HepG2 (cell line): ENCODE measurements at regions of chr10 and their contacts with region 1.

Region 1: DNA sequence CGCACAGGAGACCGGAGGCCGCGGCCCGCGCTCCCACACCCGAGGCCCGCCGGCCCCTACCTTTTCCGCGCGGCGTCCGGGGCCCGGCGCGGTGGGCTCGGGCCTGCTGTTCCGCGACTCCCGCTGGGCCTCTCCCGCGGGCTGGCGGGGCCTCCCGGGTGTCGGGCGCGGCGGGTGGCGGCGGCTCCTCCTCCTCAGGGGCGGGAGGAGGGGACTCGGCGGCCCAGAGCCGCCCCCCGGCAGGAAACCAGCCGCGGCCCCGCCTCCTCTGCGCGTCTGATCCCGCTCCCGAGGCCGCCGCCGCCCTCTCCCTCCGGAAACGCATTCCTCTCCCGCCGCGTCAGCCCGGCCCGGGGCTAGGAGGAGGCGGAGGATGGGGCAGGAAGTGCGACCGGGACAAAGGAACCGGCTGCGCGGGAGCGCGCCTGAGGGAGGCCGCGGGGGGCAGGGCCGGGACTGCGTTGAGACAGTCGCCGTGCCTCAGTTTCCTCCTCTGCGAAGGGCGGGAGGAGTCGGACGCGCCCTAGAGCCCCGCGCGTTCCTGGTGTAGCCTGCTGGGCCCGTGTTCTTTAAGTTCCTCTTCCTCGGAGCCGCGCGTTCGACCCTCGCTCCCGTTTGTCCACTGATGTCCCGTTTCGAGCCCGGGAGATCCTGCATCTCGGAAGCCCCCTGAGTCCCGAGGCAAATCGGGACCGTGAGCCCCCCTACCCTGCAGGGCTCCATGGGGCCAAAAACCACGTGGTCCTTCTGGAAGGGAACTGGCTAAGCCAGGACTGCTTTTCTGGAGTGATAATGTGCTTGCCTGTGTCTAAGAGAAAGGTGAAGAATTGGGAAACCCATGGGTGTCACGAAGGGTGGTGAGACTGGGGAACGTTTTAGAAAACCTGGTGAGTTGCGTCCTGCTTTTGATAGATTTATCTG is at the start of gene ITGB1:
- DNase-seq: peak; percentile 86
- ATAC-seq: peak; percentile 93
- H3K4me3 ChIP-seq: peak within 1 kb of the TSS; percentile 91 to 95 (median 95)
- H3K27ac ChIP-seq: peak within 1 kb of the TSS; percentile 96
- H3K4me1 ChIP-seq: peaks cover 56% of the 10 kb centered on the region
- H3K27me3 ChIP-seq: no peaks in the 10 kb centered on the region; a peak in 1 of 5 replicates
- CTCF ChIP-seq: 0 out of 2 replicates have a peak, but pooled peaks have one; percentile 6
- EP300 ChIP-seq: peak in 1 of 2 experiments; percentile 52; a peak in 1 of 4 replicates
- POLR2A ChIP-seq: peak; percentile 93 to 94
- RAD21 ChIP-seq: peak; percentile 37; the same call in 1 of the 2 replicates
- total RNA-seq, gene ITGB1: 123 and 190 TPM in 2 replicates

Region 2: DNA sequence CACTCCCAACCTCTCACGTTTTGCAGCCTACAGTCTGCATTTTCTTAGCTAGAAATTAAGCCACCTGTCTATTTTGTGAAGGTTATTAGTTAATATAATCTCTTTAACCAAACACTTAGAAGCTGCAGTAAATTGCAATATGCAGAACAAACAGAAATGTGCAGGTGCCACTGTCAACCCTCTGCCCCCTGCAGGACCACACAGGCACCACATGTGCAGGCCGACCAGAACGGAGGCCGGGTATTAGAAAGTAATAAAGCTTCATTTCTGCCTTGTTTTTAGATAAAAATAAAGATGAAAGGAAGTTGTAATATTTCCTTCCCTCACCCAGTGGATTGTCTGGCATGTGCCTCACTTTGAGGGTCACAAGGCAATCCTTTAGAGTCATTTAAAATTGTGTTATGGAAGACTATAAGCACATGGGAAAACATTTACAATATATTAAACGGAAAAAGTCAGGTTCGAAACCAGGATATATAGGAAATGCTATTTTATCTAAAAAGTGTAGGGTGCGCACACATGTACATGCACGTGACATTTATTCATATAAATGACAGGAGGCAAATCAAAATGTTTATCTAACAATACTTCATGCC is 1187.9 kb before region 1 on chr10:
- CTCF ChIA-PET with region 1: no interaction called
- POLR2A ChIA-PET with region 1: no interaction called
- in situ Hi-C with region 1: no loop called
- intact Hi-C with region 1: no loop called
- DNase-seq: peak; percentile 10
- ATAC-seq: peak; percentile 92
- H3K4me3 ChIP-seq: no peak overlapping the region
- H3K27ac ChIP-seq: no peak overlapping the region
- H3K4me1 ChIP-seq: no peaks in the 10 kb centered on the region
- H3K27me3 ChIP-seq: peaks cover 1 to 4% of the 10 kb centered on the region in 2 experiments; a peak in 1 of 5 replicates
- CTCF ChIP-seq: peak; percentile 76
- EP300 ChIP-seq: no peak
- POLR2A ChIP-seq: no peak
- RAD21 ChIP-seq: peak; percentile 54; the same call in 1 of the 2 replicates

Region 3: DNA sequence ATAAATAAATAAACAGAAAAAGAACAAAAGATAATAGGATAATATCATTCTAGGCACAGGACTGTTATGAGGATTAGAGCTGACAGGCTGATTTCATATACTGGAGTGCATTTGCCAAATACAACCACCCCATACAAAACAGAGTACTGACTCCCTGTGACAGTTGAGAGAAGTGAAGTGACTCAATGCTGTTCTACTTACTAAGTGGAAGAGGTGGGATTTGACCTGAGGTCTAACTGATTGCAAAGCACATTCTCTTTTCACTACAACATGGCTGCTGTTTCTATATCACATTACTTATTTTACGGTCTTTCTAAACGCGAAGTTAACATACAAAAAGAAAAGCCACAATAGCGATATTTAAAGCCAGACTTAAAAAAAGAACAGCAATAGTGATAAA is 51.8 kb before region 1 on chr10:
- CTCF ChIA-PET with region 1: no interaction called
- POLR2A ChIA-PET with region 1: no interaction called
- in situ Hi-C with region 1: no loop called
- intact Hi-C with region 1: loop called (anchors 10 kb)
- DNase-seq: no peak
- ATAC-seq: no peak
- H3K4me3 ChIP-seq: no peak overlapping the region
- H3K27ac ChIP-seq: no peak overlapping the region
- H3K4me1 ChIP-seq: 0 out of 2 replicates have a peak, but pooled peaks cover 7% of the 10 kb centered on the region
- H3K27me3 ChIP-seq: no peaks in the 10 kb centered on the region
- CTCF ChIP-seq: no peak
- EP300 ChIP-seq: no peak
- POLR2A ChIP-seq: no peak
- RAD21 ChIP-seq: no peak

Region 4: GRCh38 chr10:32922170-32922569 is 36.2 kb before region 1 on chr10:
- CTCF ChIA-PET with region 1: no interaction called
- POLR2A ChIA-PET with region 1: no interaction called
- in situ Hi-C with region 1: no loop called
- intact Hi-C with region 1: no loop called
- DNase-seq: no peak
- ATAC-seq: no peak
- H3K4me3 ChIP-seq: no peak overlapping the region
- H3K27ac ChIP-seq: no peak overlapping the region
- H3K4me1 ChIP-seq: no peaks in the 10 kb centered on the region
- H3K27me3 ChIP-seq: no peaks in the 10 kb centered on the region
- CTCF ChIP-seq: no peak
- EP300 ChIP-seq: no peak
- POLR2A ChIP-seq: no peak
- RAD21 ChIP-seq: no peak

Region 5: GRCh38 chr10:32932225-32932729 is 26.1 kb before region 1 on chr10:
- CTCF ChIA-PET with region 1: no interaction called
- POLR2A ChIA-PET with region 1: no interaction called
- in situ Hi-C with region 1: no loop called
- intact Hi-C with region 1: no loop called
- DNase-seq: no peak
- ATAC-seq: no peak
- H3K4me3 ChIP-seq: no peak overlapping the region
- H3K27ac ChIP-seq: no peak overlapping the region
- H3K4me1 ChIP-seq: no peaks in the 10 kb centered on the region
- H3K27me3 ChIP-seq: no peaks in the 10 kb centered on the region
- CTCF ChIP-seq: no peak
- EP300 ChIP-seq: no peak
- POLR2A ChIP-seq: no peak
- RAD21 ChIP-seq: no peak

Region 6: GRCh38 chr10:32943854-32944661 is 14.3 kb before region 1 on chr10:
- CTCF ChIA-PET with region 1: no interaction called
- POLR2A ChIA-PET with region 1: interaction called, 18 read pairs
- in situ Hi-C with region 1: no loop called
- intact Hi-C with region 1: no loop called
- DNase-seq: peak; percentile 91
- ATAC-seq: peak; percentile 96
- H3K4me3 ChIP-seq: peak overlapping the region; percentile 31 to 68 (median 48); a peak in 5 of 6 replicates
- H3K27ac ChIP-seq: peak overlapping the region; percentile 67
- H3K4me1 ChIP-seq: peaks cover 98% of the 10 kb centered on the region
- H3K27me3 ChIP-seq: no peaks in the 10 kb centered on the region
- CTCF ChIP-seq: no peak
- EP300 ChIP-seq: no peak
- POLR2A ChIP-seq: peak; percentile 31 to 81; a peak in 3 of 4 replicates
- RAD21 ChIP-seq: 0 out of 2 replicates have a peak, but pooled peaks have one; percentile 32

Region 7: DNA sequence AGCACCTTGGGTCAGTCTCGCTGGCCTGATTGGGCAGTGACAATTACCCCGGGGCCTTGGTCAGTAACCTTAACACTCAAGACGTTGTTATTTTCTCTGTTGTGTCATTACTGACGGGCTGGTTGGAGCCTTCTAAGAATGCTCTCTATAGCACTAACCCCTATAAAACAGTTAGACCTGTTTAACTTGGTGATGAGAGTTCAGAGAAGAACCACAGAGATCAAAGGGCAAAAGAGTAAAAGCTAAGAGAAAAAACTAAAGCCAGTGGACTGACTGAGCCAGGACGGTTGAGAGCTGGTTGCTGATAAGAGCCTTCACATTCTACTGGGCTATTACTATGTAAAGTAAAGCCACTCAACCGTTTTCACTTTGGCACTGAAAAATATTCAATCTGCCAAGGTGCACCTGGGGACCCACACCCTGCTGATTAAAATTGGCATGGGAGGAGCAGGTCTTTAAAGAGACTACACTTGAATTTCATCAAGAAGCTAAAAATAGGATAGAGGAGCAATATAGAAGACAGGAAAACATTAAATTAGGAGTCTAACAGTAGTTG is 13.3 kb after region 1 on chr10:
- CTCF ChIA-PET with region 1: no interaction called
- POLR2A ChIA-PET with region 1: interaction called, 11 read pairs
- in situ Hi-C with region 1: no loop called
- intact Hi-C with region 1: no loop called
- DNase-seq: peak; percentile 80
- ATAC-seq: peak; percentile 99
- H3K4me3 ChIP-seq: peak overlapping the region; percentile 36 to 61 (median 58)
- H3K27ac ChIP-seq: peak overlapping the region; percentile 24
- H3K4me1 ChIP-seq: peaks cover 32% of the 10 kb centered on the region
- H3K27me3 ChIP-seq: no peaks in the 10 kb centered on the region
- CTCF ChIP-seq: no peak
- EP300 ChIP-seq: peak in 1 of 2 experiments; percentile 40; a peak in 1 of 4 replicates
- POLR2A ChIP-seq: no peak
- RAD21 ChIP-seq: no peak

Region 8: GRCh38 chr10:32980558-32981468 is 22.5 kb after region 1 on chr10:
- CTCF ChIA-PET with region 1: no interaction called
- POLR2A ChIA-PET with region 1: interaction called, 38 read pairs
- in situ Hi-C with region 1: no loop called
- intact Hi-C with region 1: loop called (anchors 1 kb)
- DNase-seq: peak; percentile 87
- ATAC-seq: peak; percentile 92
- H3K4me3 ChIP-seq: peak overlapping the region; percentile 61 to 79 (median 67)
- H3K27ac ChIP-seq: peak overlapping the region; percentile 70
- H3K4me1 ChIP-seq: peaks cover 49% of the 10 kb centered on the region
- H3K27me3 ChIP-seq: no peaks in the 10 kb centered on the region; a peak in 1 of 5 replicates
- CTCF ChIP-seq: 0 out of 2 replicates have a peak, but pooled peaks have one; percentile 2
- EP300 ChIP-seq: no peak; a peak in 1 of 4 replicates
- POLR2A ChIP-seq: peak; percentile 72
- RAD21 ChIP-seq: peak; percentile 51